ENCODE measurements at regions of chr12 and their contacts with region 1.

Region 1: DNA sequence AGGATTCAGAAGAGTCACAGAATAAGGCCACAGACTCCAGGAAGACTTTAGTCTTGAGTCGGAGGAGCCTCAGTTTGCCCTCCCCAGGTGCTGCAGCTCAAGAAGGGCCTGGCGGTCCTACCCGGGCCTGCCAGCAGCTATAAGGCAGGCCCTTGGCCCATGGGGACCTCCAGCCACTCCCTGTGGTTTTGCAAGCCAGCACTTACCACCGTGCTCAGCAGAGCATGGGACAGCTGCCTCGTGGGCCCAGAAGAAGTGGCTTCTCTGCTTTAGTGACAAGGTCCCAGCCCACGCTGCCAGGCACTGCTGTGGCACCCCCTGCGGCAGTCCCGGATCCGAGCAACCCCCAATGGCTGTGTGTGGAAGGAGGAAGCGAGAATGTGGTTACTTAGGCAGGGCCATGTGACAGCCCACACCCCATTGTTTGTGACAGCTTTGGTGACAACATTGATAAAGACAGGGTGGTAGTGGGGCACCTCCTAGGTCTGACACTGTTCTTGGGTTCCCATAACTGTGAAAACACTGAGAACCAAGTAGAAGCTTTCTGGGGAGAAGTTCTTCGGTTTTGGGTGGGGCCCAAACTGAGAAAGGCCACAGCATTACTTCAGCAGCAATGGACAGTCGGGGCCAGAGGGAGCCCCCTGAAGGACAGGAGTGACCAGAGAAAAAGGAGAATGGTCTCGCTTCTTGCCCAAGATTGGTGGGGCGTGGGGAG is at the start of gene SELPLG:
- DNase-seq: peak; percentile 93
- H3K4me3 Mint-ChIP-seq: peak within 1 kb of the TSS; percentile 97
- H3K27ac Mint-ChIP-seq: peak within 1 kb of the TSS; percentile 97
- H3K4me1 Mint-ChIP-seq: peaks cover 51% of the 10 kb centered on the region
- H3K27me3 Mint-ChIP-seq: no peaks in the 10 kb centered on the region
- total RNA-seq, gene SELPLG: 56.8 to 60.1 TPM

Region 2: GRCh38 chr12:107760809-107761501 is 872.7 kb before region 1 on chr12 and contains the start of gene PRDM4:
- CTCF ChIA-PET with region 1: no interaction called
- POLR2A ChIA-PET with region 1: no interaction called
- intact Hi-C with region 1: loop called (anchors 5 kb)
- DNase-seq: peak; percentile 94
- H3K4me3 Mint-ChIP-seq: peak within 1 kb of the TSS; percentile 92
- H3K27ac Mint-ChIP-seq: peak within 1 kb of the TSS; percentile 88
- H3K4me1 Mint-ChIP-seq: peaks cover 27% of the 10 kb centered on the region
- H3K27me3 Mint-ChIP-seq: no peaks in the 10 kb centered on the region
- total RNA-seq, gene PRDM4: 33.4 to 39.0 TPM

Region 3: DNA sequence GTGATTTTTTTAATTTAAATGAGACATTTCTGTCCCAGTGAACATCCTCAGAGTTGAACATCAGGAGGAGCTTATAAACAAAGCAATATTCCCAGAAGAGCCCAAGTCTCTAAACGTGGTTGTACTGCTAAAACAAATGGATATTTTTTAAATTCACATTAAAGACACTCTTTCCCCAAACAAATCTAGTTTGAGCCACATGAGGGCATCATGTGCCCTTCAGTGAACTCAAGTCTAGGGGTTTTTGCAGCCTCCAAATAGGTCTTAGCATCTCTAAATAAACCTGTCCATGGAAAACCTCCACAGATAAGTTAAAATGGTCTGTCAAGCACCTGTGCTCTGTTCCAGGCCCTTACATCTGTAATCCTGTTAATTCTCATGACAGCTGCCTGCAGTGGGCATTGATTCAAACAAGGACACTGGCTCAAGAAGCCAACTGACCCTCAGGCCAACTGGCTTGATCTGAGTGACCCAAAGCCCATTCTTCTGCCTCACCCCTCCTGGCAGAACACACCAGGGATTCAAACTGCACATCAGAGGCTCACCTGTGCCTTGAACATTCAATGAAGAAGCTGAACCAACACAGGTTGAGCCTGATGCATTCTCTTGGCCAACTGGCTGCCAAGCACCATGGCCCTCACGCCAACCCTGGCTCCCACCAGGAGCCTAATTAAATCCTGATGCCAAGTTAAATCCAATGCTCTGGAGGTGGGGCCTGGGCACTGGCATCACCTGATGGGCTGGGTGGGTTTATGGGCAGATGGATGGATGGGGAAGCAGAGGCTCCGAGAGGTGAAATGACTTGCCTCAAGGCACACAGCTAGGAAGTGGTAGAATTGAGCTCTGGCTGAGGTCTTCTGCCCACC is 62.7 kb before region 1 on chr12:
- CTCF ChIA-PET with region 1: interaction called, 7 read pairs
- POLR2A ChIA-PET with region 1: interaction called, 11 read pairs
- intact Hi-C with region 1: loop called (anchors 1 kb)
- DNase-seq: peak; percentile 18
- H3K4me3 Mint-ChIP-seq: no peak overlapping the region
- H3K27ac Mint-ChIP-seq: no peak overlapping the region
- H3K4me1 Mint-ChIP-seq: peaks cover 76% of the 10 kb centered on the region
- H3K27me3 Mint-ChIP-seq: no peaks in the 10 kb centered on the region

Region 4: GRCh38 chr12:108649669-108650068 is 16.0 kb after region 1 on chr12:
- CTCF ChIA-PET with region 1: interaction called, 6 read pairs
- POLR2A ChIA-PET with region 1: interaction called, 18 read pairs
- intact Hi-C with region 1: loop called (anchors 1 kb)
- DNase-seq: no peak
- H3K4me3 Mint-ChIP-seq: no peak overlapping the region
- H3K27ac Mint-ChIP-seq: peak overlapping the region; percentile 50
- H3K4me1 Mint-ChIP-seq: peaks cover 38% of the 10 kb centered on the region
- H3K27me3 Mint-ChIP-seq: no peaks in the 10 kb centered on the region

Region 5: DNA sequence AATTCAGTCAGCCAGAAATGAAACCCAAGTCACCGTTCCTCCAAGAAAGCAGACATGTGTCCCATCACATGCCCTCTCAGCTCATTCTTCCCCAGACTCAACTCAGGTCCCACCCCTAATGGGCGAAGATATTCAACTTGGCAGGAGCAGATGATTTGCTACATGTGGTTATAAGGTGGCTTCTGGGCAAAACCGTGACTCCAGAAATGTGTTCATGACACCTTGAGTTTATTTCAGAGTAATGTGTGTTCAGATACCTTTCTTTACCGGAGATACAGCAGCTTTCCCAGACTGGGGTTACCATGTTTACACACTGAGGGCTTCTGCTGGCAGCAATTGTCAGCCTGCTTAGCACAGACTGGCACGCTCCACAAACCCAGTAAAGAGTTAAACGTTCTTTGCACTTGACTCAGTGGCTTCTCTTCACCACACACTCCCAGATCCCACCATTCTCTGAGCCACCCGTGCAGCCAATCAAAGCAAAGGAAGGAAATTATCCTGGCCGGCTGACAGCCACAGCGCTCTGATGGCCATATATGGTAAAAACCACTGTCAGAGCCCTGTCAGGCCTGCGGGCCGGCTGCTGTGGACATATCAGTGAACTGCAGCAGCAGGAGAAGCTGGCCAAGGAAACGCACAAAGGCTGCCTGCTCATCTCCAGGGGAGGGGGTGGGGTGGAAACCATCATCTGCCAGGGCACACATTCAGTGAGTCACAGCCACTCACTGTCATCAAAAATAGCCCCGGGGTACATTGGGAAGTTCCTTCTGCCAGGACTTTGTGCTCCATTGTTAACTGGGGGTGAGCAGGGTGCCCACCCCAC is 57.7 kb after region 1 on chr12:
- CTCF ChIA-PET with region 1: interaction called, 6 read pairs
- POLR2A ChIA-PET with region 1: interaction called, 10 read pairs
- intact Hi-C with region 1: loop called (anchors 1 kb)
- DNase-seq: peak; percentile 91
- H3K4me3 Mint-ChIP-seq: peak overlapping the region; percentile 56
- H3K27ac Mint-ChIP-seq: peak overlapping the region; percentile 94
- H3K4me1 Mint-ChIP-seq: peaks cover 70% of the 10 kb centered on the region
- H3K27me3 Mint-ChIP-seq: no peaks in the 10 kb centered on the region

Region 6: GRCh38 chr12:108803428-108804105 is 169.9 kb after region 1 on chr12:
- CTCF ChIA-PET with region 1: interaction called, 26 read pairs
- POLR2A ChIA-PET with region 1: interaction called, 3 read pairs
- intact Hi-C with region 1: no loop called
- DNase-seq: peak; percentile 73
- H3K4me3 Mint-ChIP-seq: no peak overlapping the region
- H3K27ac Mint-ChIP-seq: peak overlapping the region; percentile 33
- H3K4me1 Mint-ChIP-seq: peaks cover 7% of the 10 kb centered on the region
- H3K27me3 Mint-ChIP-seq: no peaks in the 10 kb centered on the region

Region 7: GRCh38 chr12:109052414-109053323 is 419.0 kb after region 1 on chr12 and contains the start of gene USP30:
- CTCF ChIA-PET with region 1: no interaction called
- POLR2A ChIA-PET with region 1: no interaction called
- intact Hi-C with region 1: loop called (anchors 2 kb)
- DNase-seq: peak; percentile 89
- H3K4me3 Mint-ChIP-seq: peak within 1 kb of the TSS; percentile 89
- H3K27ac Mint-ChIP-seq: peak within 1 kb of the TSS; percentile 97
- H3K4me1 Mint-ChIP-seq: peaks cover 15% of the 10 kb centered on the region
- H3K27me3 Mint-ChIP-seq: no peaks in the 10 kb centered on the region
- total RNA-seq, gene USP30: 11.4 to 11.8 TPM

Measured in activated CD4-positive, alpha-beta memory T cell treated with anti-CD3 and anti-CD28 coated beads for 36 hours (primary cell).